Spleen (tissue), 13 donors: ENCODE measurements at regions of chr3 and their contacts with region 1.

Region 1: GRCh38 chr3:107516475-107516874 is 6.3 kb upstream of the BBX start:
- DNase-seq: no peak
- H3K4me3 ChIP-seq: no peak overlapping the region
- H3K27ac ChIP-seq: no peak overlapping the region
- H3K4me1 ChIP-seq: peaks cover 0 to 5% (median 0%) of the 10 kb centered on the region in 6 donors
- H3K27me3 ChIP-seq: no peaks in the 10 kb centered on the region
- CTCF ChIP-seq: no peak
- POLR2A ChIP-seq: no peak

Region 2: DNA sequence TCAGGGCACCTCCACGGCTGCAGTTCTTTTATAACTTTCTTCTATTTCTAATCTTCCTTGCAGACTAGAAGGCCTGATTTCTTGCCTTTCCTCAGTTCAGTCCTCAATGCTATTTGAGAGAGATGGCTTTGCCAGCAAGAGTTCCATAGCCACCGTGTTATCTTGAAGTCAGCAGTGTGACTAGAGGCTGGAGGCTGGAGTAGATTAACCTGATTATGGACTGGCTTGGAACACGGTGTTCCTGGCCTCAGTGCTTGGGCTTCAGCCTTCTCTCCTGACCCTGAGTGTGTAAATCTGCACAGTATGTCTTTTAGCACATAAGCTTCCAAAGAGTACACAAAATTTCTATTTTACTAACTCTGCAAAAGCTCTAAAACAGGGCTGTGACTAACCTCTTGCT is 77.8 kb before region 1 on chr3:
- intact Hi-C with region 1: loop called (anchors 5 kb)
- DNase-seq: no peak
- H3K4me3 ChIP-seq: no peak overlapping the region
- H3K27ac ChIP-seq: no peak overlapping the region
- H3K4me1 ChIP-seq: no peaks in the 10 kb centered on the region
- H3K27me3 ChIP-seq: no peaks in the 10 kb centered on the region
- CTCF ChIP-seq: no peak
- POLR2A ChIP-seq: no peak